Activated B cell treated with CpG ODN at 0.5 μM for 24 hours (primary cell): ENCODE measurements at regions of chr22 and their contacts with region 1.

Region 1: DNA sequence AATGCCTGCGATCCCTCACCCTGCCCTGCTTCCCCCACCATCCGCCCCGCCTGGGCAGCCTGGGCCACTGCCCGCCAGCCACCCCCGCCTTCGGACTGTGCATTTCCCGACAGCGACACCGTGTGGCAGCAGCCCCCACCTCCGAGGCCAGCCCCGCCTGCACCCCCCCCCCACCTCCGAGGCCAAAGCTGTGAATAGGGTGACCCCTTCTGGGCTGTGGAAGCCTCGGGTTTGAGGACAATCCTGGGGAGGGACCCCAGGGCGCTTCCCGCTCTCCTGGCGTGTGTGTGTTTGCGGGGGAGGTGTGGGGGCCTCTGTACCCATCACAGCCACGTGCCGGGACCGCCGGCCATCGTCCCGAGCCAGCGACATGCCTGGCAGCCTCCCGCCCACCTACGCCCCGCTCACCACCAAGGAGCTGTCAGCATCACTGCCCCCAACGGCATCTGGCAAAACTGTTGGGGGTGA is 33.8 kb upstream of the PPARA start:
- DNase-seq: peak; percentile 85
- ATAC-seq: peak; percentile 96
- H3K4me3 Mint-ChIP-seq: no peak overlapping the region
- H3K27ac Mint-ChIP-seq: no peak overlapping the region
- H3K4me1 Mint-ChIP-seq: no peaks in the 10 kb centered on the region
- H3K27me3 Mint-ChIP-seq: peaks cover 2% of the 10 kb centered on the region
- CTCF ChIP-seq: no peak

Region 2: DNA sequence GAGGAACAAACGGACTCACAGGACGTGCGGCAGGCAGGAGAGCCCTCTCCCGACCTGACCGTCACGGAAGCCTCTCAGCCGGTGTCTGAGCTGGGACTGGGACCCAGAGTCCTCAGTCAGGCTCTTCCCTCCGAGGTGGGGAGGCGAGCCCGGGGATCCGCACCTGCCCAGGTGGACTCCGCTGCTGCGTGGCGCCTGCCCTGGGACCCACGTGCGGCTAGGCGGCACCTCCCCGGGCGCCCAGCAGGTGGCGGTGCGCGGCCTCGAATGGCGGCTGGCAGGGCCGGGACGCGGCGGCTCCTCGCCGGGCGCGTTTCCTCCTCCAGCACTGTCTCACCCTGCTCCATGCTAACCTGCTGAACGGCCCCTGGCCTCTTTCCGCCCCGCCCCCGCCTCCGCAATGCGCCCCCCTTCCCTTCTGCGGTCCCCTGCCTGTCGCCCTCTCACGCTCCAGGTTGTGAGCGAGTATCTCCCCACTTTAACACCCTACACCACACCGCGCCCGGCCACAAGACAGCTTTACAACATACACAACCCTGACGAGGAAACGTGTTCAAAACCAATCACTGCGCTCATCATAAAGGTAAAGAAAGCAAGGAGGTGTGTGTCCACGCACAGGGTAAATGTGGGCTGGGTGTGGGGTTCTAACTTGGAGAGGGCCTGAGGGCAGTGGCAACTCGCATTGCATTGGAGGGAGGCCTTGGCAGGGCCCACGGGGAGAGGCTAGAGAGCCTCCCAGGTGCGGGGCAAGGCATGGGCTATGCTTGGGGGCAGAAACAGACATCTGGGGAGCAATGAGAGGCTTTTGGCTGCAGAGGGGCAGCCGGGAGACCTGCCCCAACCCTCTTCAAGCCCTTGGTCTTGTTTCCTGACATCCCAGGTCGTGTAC is 470.8 kb before region 1 on chr22:
- CTCF ChIA-PET with region 1: interaction called, 3 read pairs
- POLR2A ChIA-PET with region 1: no interaction called
- intact Hi-C with region 1: loop called (anchors 5 kb)
- DNase-seq: peak; percentile 80
- ATAC-seq: peak; percentile 97
- H3K4me3 Mint-ChIP-seq: no peak overlapping the region
- H3K27ac Mint-ChIP-seq: no peak overlapping the region
- H3K4me1 Mint-ChIP-seq: peaks cover 2% of the 10 kb centered on the region
- H3K27me3 Mint-ChIP-seq: peaks cover 46% of the 10 kb centered on the region
- CTCF ChIP-seq: peak; percentile 44

Region 3: DNA sequence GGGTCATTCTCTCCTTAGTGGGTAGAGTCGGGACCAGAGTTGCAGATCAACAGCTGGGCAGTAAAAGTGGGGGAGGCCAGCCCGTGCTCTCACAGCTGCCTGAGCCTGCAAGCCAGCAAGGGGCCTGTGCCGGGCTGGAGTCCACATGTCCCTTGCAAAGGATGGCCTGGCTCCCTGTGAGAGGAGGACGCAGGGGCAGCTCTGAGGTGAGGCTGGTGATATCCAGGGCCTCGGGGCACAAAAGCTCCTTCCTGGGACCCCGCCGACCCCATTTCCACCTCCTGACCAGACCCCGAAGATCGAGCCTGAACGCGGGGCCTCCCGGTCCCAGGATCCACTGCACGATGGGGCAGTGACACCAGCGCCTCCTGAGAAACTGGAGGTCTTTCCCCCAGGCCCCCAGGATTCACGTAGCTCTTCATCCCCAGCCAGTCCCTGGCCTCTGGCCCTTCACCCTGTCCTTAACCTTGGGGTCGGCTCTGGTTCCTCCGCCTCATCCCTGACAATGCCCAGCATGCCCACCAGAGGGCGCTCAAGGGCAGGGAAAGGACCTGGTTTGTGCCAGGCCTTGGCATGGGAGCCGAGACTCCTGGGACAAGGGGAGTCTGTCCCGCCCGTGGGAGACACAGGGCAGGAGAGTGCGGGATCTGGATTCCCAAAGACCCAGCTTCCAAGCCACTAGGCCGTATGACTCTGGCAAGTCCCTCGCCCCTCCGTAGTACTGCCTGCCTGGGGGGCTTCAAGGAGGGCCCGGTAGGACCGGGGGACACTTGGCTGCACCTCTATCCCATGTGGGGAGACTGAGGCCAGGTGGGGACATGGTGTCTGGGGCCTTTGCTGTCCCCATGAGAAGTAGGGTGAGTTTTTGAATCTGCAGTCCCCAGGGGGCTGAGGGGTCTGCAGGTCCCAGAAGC is 121.8 kb before region 1 on chr22:
- CTCF ChIA-PET with region 1: interaction called, 76 read pairs
- POLR2A ChIA-PET with region 1: interaction called, 9 read pairs
- intact Hi-C with region 1: loop called (anchors 1 kb)
- DNase-seq: peak; percentile 79
- ATAC-seq: peak; percentile 51
- H3K4me3 Mint-ChIP-seq: no peak overlapping the region
- H3K27ac Mint-ChIP-seq: no peak overlapping the region
- H3K4me1 Mint-ChIP-seq: peaks cover 26% of the 10 kb centered on the region
- H3K27me3 Mint-ChIP-seq: peaks cover 2% of the 10 kb centered on the region
- CTCF ChIP-seq: peak; percentile 24

Region 4: GRCh38 chr22:46013460-46014416 is 102.8 kb before region 1 on chr22:
- CTCF ChIA-PET with region 1: interaction called, 153 read pairs
- POLR2A ChIA-PET with region 1: interaction called, 12 read pairs
- intact Hi-C with region 1: loop called (anchors 1 kb)
- DNase-seq: peak; percentile 79
- ATAC-seq: peak; percentile 97
- H3K4me3 Mint-ChIP-seq: peak overlapping the region; percentile 91
- H3K27ac Mint-ChIP-seq: peak overlapping the region; percentile 82
- H3K4me1 Mint-ChIP-seq: peaks cover 7% of the 10 kb centered on the region
- H3K27me3 Mint-ChIP-seq: no peaks in the 10 kb centered on the region
- CTCF ChIP-seq: no peak

Region 5: GRCh38 chr22:46262449-46263232 is 146.1 kb after region 1 on chr22:
- CTCF ChIA-PET with region 1: no interaction called
- POLR2A ChIA-PET with region 1: no interaction called
- intact Hi-C with region 1: no loop called
- DNase-seq: no peak
- ATAC-seq: peak; percentile 57
- H3K4me3 Mint-ChIP-seq: peak overlapping the region; percentile 7
- H3K27ac Mint-ChIP-seq: no peak overlapping the region
- H3K4me1 Mint-ChIP-seq: peaks cover 13% of the 10 kb centered on the region
- H3K27me3 Mint-ChIP-seq: peaks cover 58% of the 10 kb centered on the region
- CTCF ChIP-seq: no peak

Region 6: GRCh38 chr22:47593911-47594311 is 1477.4 kb after region 1 on chr22:
- CTCF ChIA-PET with region 1: no interaction called
- POLR2A ChIA-PET with region 1: no interaction called
- intact Hi-C with region 1: no loop called
- DNase-seq: no peak
- ATAC-seq: no peak
- H3K4me3 Mint-ChIP-seq: no peak overlapping the region
- H3K27ac Mint-ChIP-seq: no peak overlapping the region
- H3K4me1 Mint-ChIP-seq: no peaks in the 10 kb centered on the region
- H3K27me3 Mint-ChIP-seq: no peaks in the 10 kb centered on the region
- CTCF ChIP-seq: no peak